CD8-positive, alpha-beta T cell (primary cell): ENCODE measurements at regions of chr3 and their contacts with region 1.

Region 1: DNA sequence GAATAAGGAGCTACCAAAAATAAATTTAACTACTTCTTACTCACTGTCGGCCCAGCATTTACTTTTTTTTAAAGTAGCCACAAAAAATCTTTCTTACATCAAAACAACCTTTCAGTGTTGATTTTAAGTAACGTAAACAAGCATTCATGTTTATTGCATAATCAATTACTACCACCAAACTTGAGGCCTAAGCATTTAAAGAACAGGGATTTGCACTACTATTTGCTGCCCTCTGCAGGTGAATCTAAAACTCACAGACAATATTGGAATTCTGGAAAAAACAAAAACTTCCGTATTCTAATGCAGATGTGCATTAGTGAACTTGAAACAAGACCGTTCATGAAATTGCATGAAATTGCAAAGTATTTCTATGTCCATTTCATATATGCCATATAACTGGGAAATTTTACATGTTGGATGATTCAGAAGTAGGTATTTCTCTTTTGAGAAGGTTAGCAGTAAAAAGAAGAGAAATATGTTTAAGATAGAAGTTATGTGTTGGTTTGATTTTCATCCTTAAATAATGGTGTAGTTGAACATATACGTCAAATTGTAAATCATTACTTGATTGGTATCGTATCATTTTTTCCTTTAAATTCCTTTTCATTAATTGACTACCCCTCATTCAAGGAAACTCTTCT is 55.6 kb downstream of the CGGBP1 start:
- DNase-seq: peak in 2 of 9 experiments; percentile 39 to 54
- ATAC-seq: no peak
- H3K4me3 ChIP-seq: no peak overlapping the region
- H3K4me3 Mint-ChIP-seq: no peak overlapping the region
- H3K27ac ChIP-seq: no peak overlapping the region
- H3K27ac Mint-ChIP-seq: no peak overlapping the region
- H3K4me1 ChIP-seq: no peaks in the 10 kb centered on the region
- H3K4me1 Mint-ChIP-seq: peaks cover 14% of the 10 kb centered on the region
- H3K27me3 ChIP-seq: no peaks in the 10 kb centered on the region
- H3K27me3 Mint-ChIP-seq: peaks cover 7% of the 10 kb centered on the region
- CTCF ChIP-seq: peak; percentile 63

Region 2: GRCh38 chr3:87260270-87260669 is 743.0 kb before region 1 on chr3:
- CTCF ChIA-PET with region 1: interaction called, 3 read pairs
- POLR2A ChIA-PET with region 1: no interaction called
- intact Hi-C with region 1: loop called (anchors 2 to 10 kb)
- DNase-seq: peak in 6 of 9 experiments; percentile 14 to 59 (median 43)
- ATAC-seq: peak; percentile 66
- H3K4me3 ChIP-seq: no peak overlapping the region
- H3K4me3 Mint-ChIP-seq: no peak overlapping the region
- H3K27ac ChIP-seq: no peak overlapping the region
- H3K27ac Mint-ChIP-seq: no peak overlapping the region
- H3K4me1 ChIP-seq: no peaks in the 10 kb centered on the region
- H3K4me1 Mint-ChIP-seq: peaks cover 2% of the 10 kb centered on the region
- H3K27me3 ChIP-seq: no peaks in the 10 kb centered on the region
- H3K27me3 Mint-ChIP-seq: no peaks in the 10 kb centered on the region
- CTCF ChIP-seq: peak; percentile 61

Region 3: DNA sequence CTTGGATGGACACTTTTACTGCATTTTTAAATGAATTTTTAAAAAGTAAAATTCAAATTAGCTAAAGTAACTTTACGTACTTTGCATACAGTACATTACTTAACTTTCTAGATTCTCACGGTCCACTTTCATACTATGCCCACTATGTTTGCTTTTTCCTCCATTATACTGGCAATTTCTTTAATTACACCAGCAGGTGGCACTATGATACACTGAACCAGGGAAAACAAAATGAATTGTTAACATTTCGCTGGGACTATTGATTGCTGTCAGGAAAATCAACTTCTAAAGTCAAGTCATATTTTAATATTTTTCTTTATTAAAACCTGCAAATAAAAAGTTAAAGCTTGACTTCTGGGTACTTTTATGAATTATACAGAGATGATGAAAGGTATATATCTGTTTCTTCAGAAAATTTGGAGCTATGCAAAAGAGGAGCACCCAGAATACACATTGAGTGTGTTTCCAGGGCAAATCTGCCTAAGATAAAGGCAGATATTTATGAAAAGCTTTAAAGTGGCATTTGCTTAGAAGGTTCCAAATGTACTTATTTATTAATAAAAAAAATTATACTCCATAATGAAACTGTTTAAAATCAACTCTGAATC is 705.0 kb before region 1 on chr3:
- CTCF ChIA-PET with region 1: interaction called, 4 read pairs
- POLR2A ChIA-PET with region 1: no interaction called
- intact Hi-C with region 1: loop called (anchors 1 to 5 kb)
- DNase-seq: peak in 2 of 9 experiments; percentile 33 to 50
- ATAC-seq: peak; percentile 62
- H3K4me3 ChIP-seq: no peak overlapping the region
- H3K4me3 Mint-ChIP-seq: no peak overlapping the region
- H3K27ac ChIP-seq: no peak overlapping the region
- H3K27ac Mint-ChIP-seq: no peak overlapping the region
- H3K4me1 ChIP-seq: no peaks in the 10 kb centered on the region
- H3K4me1 Mint-ChIP-seq: peaks cover 2% of the 10 kb centered on the region
- H3K27me3 ChIP-seq: no peaks in the 10 kb centered on the region
- H3K27me3 Mint-ChIP-seq: peaks cover 2% of the 10 kb centered on the region
- CTCF ChIP-seq: peak; percentile 89

Region 4: GRCh38 chr3:87350364-87351199 is 652.7 kb before region 1 on chr3:
- CTCF ChIA-PET with region 1: interaction called, 23 read pairs
- POLR2A ChIA-PET with region 1: no interaction called
- intact Hi-C with region 1: loop called (anchors 1 kb)
- DNase-seq: peak in 6 of 9 experiments; percentile 6 to 66 (median 18)
- ATAC-seq: peak; percentile 82
- H3K4me3 ChIP-seq: no peak overlapping the region
- H3K4me3 Mint-ChIP-seq: no peak overlapping the region
- H3K27ac ChIP-seq: no peak overlapping the region
- H3K27ac Mint-ChIP-seq: no peak overlapping the region
- H3K4me1 ChIP-seq: no peaks in the 10 kb centered on the region
- H3K4me1 Mint-ChIP-seq: no peaks in the 10 kb centered on the region
- H3K27me3 ChIP-seq: no peaks in the 10 kb centered on the region
- H3K27me3 Mint-ChIP-seq: peaks cover 3% of the 10 kb centered on the region
- CTCF ChIP-seq: peak; percentile 93

Region 5: GRCh38 chr3:87771341-87772192 is 231.7 kb before region 1 on chr3:
- CTCF ChIA-PET with region 1: interaction called, 6 read pairs
- POLR2A ChIA-PET with region 1: interaction called, 3 read pairs
- intact Hi-C with region 1: loop called (anchors 1 to 2 kb)
- DNase-seq: peak in 7 of 9 experiments; percentile 4 to 65 (median 29)
- ATAC-seq: peak; percentile 77
- H3K4me3 ChIP-seq: no peak overlapping the region
- H3K4me3 Mint-ChIP-seq: no peak overlapping the region
- H3K27ac ChIP-seq: no peak overlapping the region
- H3K27ac Mint-ChIP-seq: no peak overlapping the region
- H3K4me1 ChIP-seq: no peaks in the 10 kb centered on the region
- H3K4me1 Mint-ChIP-seq: no peaks in the 10 kb centered on the region
- H3K27me3 ChIP-seq: no peaks in the 10 kb centered on the region
- H3K27me3 Mint-ChIP-seq: peaks cover 3% of the 10 kb centered on the region
- CTCF ChIP-seq: peak; percentile 53

Region 6: DNA sequence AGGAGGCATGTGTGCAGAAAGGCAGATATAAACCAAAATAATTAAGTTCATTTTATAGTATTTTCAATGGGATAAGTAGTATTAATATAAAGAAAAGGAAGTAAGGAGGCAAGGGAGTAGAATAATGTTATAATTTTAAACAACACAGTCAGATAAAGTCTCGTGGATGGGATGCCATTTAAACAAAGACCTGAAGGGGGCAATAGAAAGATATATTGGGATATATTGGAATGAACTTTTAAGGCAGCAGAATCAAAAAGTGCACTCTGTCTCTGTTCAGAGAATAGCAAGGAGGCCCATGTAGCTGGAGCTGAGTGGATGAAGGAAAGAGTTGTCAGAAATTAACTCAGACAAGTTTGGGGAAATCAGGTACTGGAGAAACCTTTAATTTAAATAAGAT is 103.2 kb before region 1 on chr3:
- CTCF ChIA-PET with region 1: no interaction called
- POLR2A ChIA-PET with region 1: no interaction called
- intact Hi-C with region 1: loop called in 1 of 2 experiments (anchors 2 kb)
- DNase-seq: peak in 1 of 9 experiments; percentile 6
- ATAC-seq: no peak
- H3K4me3 ChIP-seq: no peak overlapping the region
- H3K4me3 Mint-ChIP-seq: no peak overlapping the region
- H3K27ac ChIP-seq: no peak overlapping the region
- H3K27ac Mint-ChIP-seq: no peak overlapping the region
- H3K4me1 ChIP-seq: no peaks in the 10 kb centered on the region
- H3K4me1 Mint-ChIP-seq: no peaks in the 10 kb centered on the region
- H3K27me3 ChIP-seq: no peaks in the 10 kb centered on the region
- H3K27me3 Mint-ChIP-seq: no peaks in the 10 kb centered on the region
- CTCF ChIP-seq: no peak